ENCODE measurements at regions of chr9 and their contacts with region 1.

Region 1: DNA sequence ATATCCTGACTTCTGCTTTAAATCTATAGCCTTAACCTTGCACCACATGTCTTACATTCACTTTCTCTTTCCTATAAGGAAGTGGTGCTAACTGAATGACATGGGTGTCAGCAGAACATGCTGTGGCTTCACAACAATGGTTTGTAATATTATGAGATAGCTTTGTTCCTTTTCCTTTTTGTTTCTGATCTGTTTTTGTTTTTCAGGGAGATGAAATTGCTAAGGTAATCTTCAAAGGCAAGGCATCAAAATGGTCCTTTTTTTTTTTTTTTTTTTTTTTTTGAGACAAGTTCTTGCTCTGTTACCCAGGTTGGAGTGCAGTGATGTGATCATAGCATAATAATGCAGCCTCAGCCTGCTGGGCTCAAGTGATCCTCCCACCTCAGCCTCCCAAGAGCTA is 53.6 kb upstream of the RANBP6 start:
- DNase-seq: peak in 18 of 35 experiments; percentile 7 to 73 (median 20)
- ATAC-seq: peak; percentile 88 to 100 (median 94)
- H3K4me3 ChIP-seq: no peak overlapping the region
- H3K4me3 Mint-ChIP-seq: peak overlapping the region; percentile 58 to 67 (median 62)
- H3K27ac ChIP-seq: peak overlapping the region; percentile 67
- H3K27ac Mint-ChIP-seq: peak overlapping the region; percentile 93 to 94
- H3K4me1 ChIP-seq: peaks cover 2 to 13% of the 10 kb centered on the region in 2 experiments
- H3K4me1 Mint-ChIP-seq: peaks cover 21 to 24% (median 23%) of the 10 kb centered on the region in 3 donors
- H3K27me3 ChIP-seq: peaks cover 0 to 6% of the 10 kb centered on the region in 2 experiments
- H3K27me3 Mint-ChIP-seq: no peaks in the 10 kb centered on the region

Region 2: DNA sequence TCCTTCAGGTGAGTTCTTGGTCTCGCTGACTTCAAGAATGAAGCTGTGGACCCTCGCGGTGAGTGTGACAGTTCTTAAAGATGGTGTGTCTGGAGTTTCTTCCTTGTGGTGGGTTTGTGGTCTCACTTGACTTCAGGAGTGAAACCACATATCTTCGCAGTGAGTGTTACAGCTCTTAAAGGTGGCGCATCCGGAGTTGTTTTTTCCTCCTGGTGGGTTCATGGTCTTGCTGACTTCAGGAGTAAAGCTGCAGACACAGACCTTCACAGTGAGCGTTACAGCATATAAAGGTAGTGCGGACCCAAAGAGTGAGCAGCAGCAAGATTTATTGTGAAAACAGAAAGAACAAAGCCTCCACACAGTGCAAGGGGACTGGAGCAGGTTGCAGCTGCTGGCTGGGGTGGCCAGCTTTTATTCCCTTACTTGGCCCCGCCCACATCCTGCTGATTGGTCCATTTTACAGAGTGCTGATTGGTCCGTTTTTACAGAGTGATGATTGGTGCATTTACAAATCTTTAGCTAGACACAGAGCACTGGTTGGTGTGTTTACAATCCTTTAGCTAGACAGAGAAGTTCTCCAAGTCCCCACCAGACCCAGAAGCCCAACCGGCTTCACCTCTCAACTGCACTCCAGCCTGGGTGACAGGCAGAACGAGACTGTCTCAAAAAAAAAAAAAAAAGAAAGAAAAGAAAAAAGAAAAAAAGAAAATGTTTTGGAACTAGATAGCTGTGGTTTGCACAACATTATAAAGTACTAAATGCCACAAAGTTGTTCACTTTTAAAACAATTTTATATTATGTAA is 227.0 kb before region 1 on chr9:
- CTCF ChIA-PET with region 1: no interaction called
- POLR2A ChIA-PET with region 1: interaction called in 1 of 2 experiments, 11 read pairs
- DNase-seq: peak; percentile 17 to 81 (median 57)
- ATAC-seq: peak; percentile 70 to 82 (median 75)
- H3K4me3 ChIP-seq: peak overlapping the region; percentile 4 to 25
- H3K4me3 Mint-ChIP-seq: peak overlapping the region; percentile 68 to 78 (median 74)
- H3K27ac ChIP-seq: peak overlapping the region; percentile 8
- H3K27ac Mint-ChIP-seq: peak overlapping the region; percentile 89 to 91
- H3K4me1 ChIP-seq: peaks cover 27 to 56% of the 10 kb centered on the region in 2 experiments
- H3K4me1 Mint-ChIP-seq: peaks cover 54 to 65% (median 57%) of the 10 kb centered on the region in 3 donors
- H3K27me3 ChIP-seq: no peaks in the 10 kb centered on the region
- H3K27me3 Mint-ChIP-seq: peaks cover 0 to 1% of the 10 kb centered on the region in 2 donors

Region 3: GRCh38 chr9:6008169-6008979 is 60.6 kb before region 1 on chr9:
- CTCF ChIA-PET with region 1: interaction called in 1 of 2 experiments, 3 read pairs
- POLR2A ChIA-PET with region 1: interaction called in 1 of 2 experiments, 11 read pairs
- DNase-seq: peak; percentile 78 to 98 (median 95)
- ATAC-seq: peak; percentile 72 to 77 (median 73)
- H3K4me3 ChIP-seq: peak overlapping the region in 1 of 2 donors; percentile 91
- H3K4me3 Mint-ChIP-seq: peak overlapping the region; percentile 77 to 95 (median 77)
- H3K27ac ChIP-seq: peak overlapping the region; percentile 95
- H3K27ac Mint-ChIP-seq: peak overlapping the region; percentile 85 to 88
- H3K4me1 ChIP-seq: peaks cover 13 to 16% of the 10 kb centered on the region in 2 experiments
- H3K4me1 Mint-ChIP-seq: peaks cover 49 to 70% (median 60%) of the 10 kb centered on the region in 3 donors
- H3K27me3 ChIP-seq: no peaks in the 10 kb centered on the region
- H3K27me3 Mint-ChIP-seq: no peaks in the 10 kb centered on the region

Region 4: GRCh38 chr9:6055213-6055612 is 13.8 kb before region 1 on chr9:
- CTCF ChIA-PET with region 1: interaction called, 6 to 12 read pairs
- POLR2A ChIA-PET with region 1: interaction called in 1 of 2 experiments, 3 read pairs
- DNase-seq: peak in 20 of 35 experiments; percentile 4 to 79 (median 32)
- ATAC-seq: peak in 2 of 4 experiments; percentile 65 to 71
- H3K4me3 ChIP-seq: no peak overlapping the region
- H3K4me3 Mint-ChIP-seq: no peak overlapping the region
- H3K27ac ChIP-seq: no peak overlapping the region
- H3K27ac Mint-ChIP-seq: no peak overlapping the region
- H3K4me1 ChIP-seq: no peaks in the 10 kb centered on the region
- H3K4me1 Mint-ChIP-seq: peaks cover 0 to 9% (median 2%) of the 10 kb centered on the region in 3 donors
- H3K27me3 ChIP-seq: no peaks in the 10 kb centered on the region
- H3K27me3 Mint-ChIP-seq: peaks cover 1 to 5% of the 10 kb centered on the region in 2 donors

Measured in T-cell (primary cell).